ENCODE measurements at regions of chr15 and their contacts with region 1.

Region 1: DNA sequence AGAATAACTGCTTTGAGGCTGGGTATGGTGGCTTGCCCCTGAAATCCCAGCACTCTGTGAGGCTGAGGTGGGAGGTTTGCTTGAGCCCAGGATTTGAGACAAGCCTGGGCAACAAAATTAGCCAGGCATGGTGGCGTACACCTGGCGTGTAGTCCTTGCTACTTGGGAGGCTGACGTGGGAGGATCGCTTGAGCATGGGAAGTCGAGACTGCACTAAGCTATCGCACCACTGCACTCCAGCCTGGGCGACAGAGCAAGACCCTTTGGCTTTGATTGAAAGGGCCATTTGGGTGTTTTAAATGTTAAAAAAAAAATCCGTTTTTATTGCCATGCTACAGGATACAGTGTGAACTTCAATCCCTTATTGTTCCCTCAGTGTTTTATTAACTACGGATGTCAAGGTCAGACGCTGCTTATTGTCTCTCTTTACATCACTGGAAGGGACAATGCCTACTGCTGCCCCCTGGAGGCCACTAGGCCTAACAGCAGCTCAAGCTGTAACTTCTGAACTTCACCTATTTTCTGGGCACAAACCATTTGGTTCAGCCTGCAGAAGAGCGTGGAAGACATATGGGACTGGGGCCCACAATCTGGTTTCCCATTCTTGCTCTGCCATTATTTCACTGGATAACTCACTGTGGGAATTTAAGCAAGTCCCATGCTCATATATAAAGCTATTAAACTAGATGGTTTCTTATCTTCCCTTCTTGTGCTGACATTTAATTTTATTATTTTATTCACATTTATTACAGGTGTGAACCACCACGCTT is 15.3 kb upstream of the IREB2 start:
- DNase-seq: peak; percentile 47 to 78
- H3K4me3 ChIP-seq: no peak overlapping the region
- H3K27ac ChIP-seq: no peak overlapping the region
- H3K4me1 ChIP-seq: no peaks in the 10 kb centered on the region
- H3K27me3 ChIP-seq: no peaks in the 10 kb centered on the region
- CTCF ChIP-seq: peak; percentile 80 to 96 (median 82)
- EP300 ChIP-seq: no peak
- POLR2A ChIP-seq: no peak
- RAD21 ChIP-seq: peak; percentile 69 to 80

Region 2: GRCh38 chr15:78315686-78316282 is 107.0 kb before region 1 on chr15:
- CTCF ChIA-PET with region 1: interaction called, 173 read pairs
- POLR2A ChIA-PET with region 1: interaction called, 4 read pairs
- DNase-seq: peak in 1 of 2 experiments; percentile 70
- H3K4me3 ChIP-seq: no peak overlapping the region
- H3K27ac ChIP-seq: peak overlapping the region; percentile 5; the same call in 1 of the 2 replicates
- H3K4me1 ChIP-seq: peaks cover 0 to 23% (median 12%) of the 10 kb centered on the region in 4 experiments; a peak in 6 of 7 replicates
- H3K27me3 ChIP-seq: no peaks in the 10 kb centered on the region
- CTCF ChIP-seq: peak; percentile 89 to 95 (median 92)
- EP300 ChIP-seq: no peak
- POLR2A ChIP-seq: no peak
- RAD21 ChIP-seq: peak; percentile 92 to 93

Region 3: GRCh38 chr15:78360426-78360825 is 62.3 kb before region 1 on chr15:
- CTCF ChIA-PET with region 1: interaction called, 10 read pairs
- POLR2A ChIA-PET with region 1: no interaction called
- DNase-seq: no peak
- H3K4me3 ChIP-seq: no peak overlapping the region
- H3K27ac ChIP-seq: no peak overlapping the region; the same call in 1 of the 2 replicates
- H3K4me1 ChIP-seq: peaks cover 2 to 8% (median 6%) of the 10 kb centered on the region in 4 experiments
- H3K27me3 ChIP-seq: peaks cover 0 to 5% (median 0%) of the 10 kb centered on the region in 4 experiments; a peak in 1 of 7 replicates
- CTCF ChIP-seq: no peak
- EP300 ChIP-seq: no peak
- POLR2A ChIP-seq: no peak
- RAD21 ChIP-seq: no peak

Region 4: GRCh38 chr15:78396976-78397375 is 25.8 kb before region 1 on chr15:
- CTCF ChIA-PET with region 1: interaction called, 240 read pairs
- POLR2A ChIA-PET with region 1: no interaction called
- DNase-seq: peak in 1 of 2 experiments; percentile 71
- H3K4me3 ChIP-seq: no peak overlapping the region
- H3K27ac ChIP-seq: no peak overlapping the region
- H3K4me1 ChIP-seq: peaks cover 4 to 31% (median 10%) of the 10 kb centered on the region in 4 experiments
- H3K27me3 ChIP-seq: peaks cover 0 to 2% (median 0%) of the 10 kb centered on the region in 4 experiments; a peak in 2 of 7 replicates
- CTCF ChIP-seq: peak; percentile 63 to 75 (median 66)
- EP300 ChIP-seq: no peak
- POLR2A ChIP-seq: no peak
- RAD21 ChIP-seq: peak; percentile 32 to 63

Region 5: DNA sequence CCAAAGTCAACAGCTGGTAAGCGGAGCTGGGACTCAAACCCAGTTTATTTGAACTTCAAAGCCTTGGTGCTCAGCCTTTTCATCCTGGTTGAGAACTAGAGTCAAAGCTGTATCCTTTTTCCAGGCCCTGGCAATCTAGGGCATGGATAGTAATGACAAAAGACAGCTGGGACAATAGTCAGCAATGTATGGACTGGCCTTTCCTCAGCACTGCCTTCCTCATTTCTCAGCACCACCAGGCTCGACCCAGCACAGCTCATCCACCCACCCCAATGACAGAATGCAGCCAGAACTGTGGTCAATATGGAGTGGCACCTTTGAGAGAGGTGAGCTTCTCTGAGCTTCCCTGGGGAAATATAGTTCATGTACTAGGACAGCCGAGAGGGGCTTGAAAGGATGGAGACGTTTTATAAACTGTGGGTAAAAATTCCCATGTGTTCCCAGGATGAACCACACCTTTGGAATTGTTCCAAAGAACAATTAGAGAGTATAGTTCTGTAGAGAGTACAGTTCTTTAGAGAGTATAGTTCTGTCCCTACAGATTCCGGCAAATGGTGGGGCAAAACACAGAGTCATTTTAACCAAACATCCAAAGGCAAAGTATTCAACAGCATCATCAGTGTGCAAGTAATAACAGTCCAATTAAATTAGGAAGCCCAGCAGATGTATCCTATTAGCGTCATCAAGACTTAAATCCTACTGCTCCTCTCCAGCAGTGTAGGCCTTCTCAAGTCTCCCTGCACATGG is 15.0 kb before region 1 on chr15:
- CTCF ChIA-PET with region 1: interaction called, 46 read pairs
- POLR2A ChIA-PET with region 1: interaction called, 4 read pairs
- DNase-seq: no peak
- H3K4me3 ChIP-seq: no peak overlapping the region
- H3K27ac ChIP-seq: no peak overlapping the region
- H3K4me1 ChIP-seq: peaks cover 0 to 8% (median 5%) of the 10 kb centered on the region in 4 experiments; a peak in 5 of 7 replicates
- H3K27me3 ChIP-seq: no peaks in the 10 kb centered on the region; a peak in 2 of 7 replicates
- CTCF ChIP-seq: no peak
- EP300 ChIP-seq: no peak
- POLR2A ChIP-seq: no peak
- RAD21 ChIP-seq: no peak

Region 6: GRCh38 chr15:78437762-78438302 is 15.1 kb after region 1 on chr15 and contains the start of gene IREB2:
- CTCF ChIA-PET with region 1: interaction called, 10 read pairs
- POLR2A ChIA-PET with region 1: interaction called, 19 read pairs
- DNase-seq: peak; percentile 97 to 99
- H3K4me3 ChIP-seq: peak within 1 kb of the TSS; percentile 77 to 94 (median 88)
- H3K27ac ChIP-seq: peak within 1 kb of the TSS; percentile 92
- H3K4me1 ChIP-seq: no peaks in the 10 kb centered on the region
- H3K27me3 ChIP-seq: no peaks in the 10 kb centered on the region
- CTCF ChIP-seq: no peak
- EP300 ChIP-seq: no peak
- POLR2A ChIP-seq: peak; percentile 59 to 73; a peak in 2 of 3 replicates
- RAD21 ChIP-seq: no peak
- total RNA-seq, gene IREB2: 99.7 and 103 TPM in 2 replicates

Measured in H1 (cell line).